ENCODE measurements at regions of chrX and their contacts with region 1.

Region 1: GRCh38 chrX:103175944-103176753 is 38.8 kb upstream of the BEX4 start:
- DNase-seq: peak; percentile 23
- H3K4me3 ChIP-seq: peak overlapping the region in 2 of 3 experiments; percentile 19 to 20
- H3K27ac ChIP-seq: no peak overlapping the region
- H3K4me1 ChIP-seq: no peaks in the 10 kb centered on the region
- H3K27me3 ChIP-seq: no peaks in the 10 kb centered on the region
- CTCF ChIP-seq: peak; percentile 82 to 95

Region 2: DNA sequence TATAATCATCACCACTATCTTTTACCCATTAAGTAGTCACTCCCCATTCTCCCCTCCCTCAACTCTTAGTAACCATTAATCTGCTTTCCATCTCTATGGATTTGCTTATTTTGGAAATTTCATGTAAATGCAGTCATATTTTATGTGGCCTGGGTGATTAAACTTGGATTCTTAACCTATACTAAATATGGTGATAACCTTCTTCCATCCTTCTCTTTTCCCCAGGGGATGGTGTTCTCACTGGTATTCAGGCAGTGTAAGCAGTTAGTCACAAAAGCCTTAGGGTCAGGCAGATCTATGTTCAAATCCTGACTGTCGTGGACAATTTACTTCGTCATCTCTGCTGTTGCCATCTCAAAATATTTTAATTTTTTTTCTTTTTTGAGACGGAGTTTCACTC is 209.4 kb before region 1 on chrX:
- CTCF ChIA-PET with region 1: no interaction called
- dilution Hi-C with region 1: no loop called
- in situ Hi-C with region 1: loop called in 1 of 2 experiments (anchors 10 kb)
- intact Hi-C with region 1: no loop called
- DNase-seq: no peak
- H3K4me3 ChIP-seq: no peak overlapping the region
- H3K27ac ChIP-seq: no peak overlapping the region
- H3K4me1 ChIP-seq: no peaks in the 10 kb centered on the region
- H3K27me3 ChIP-seq: peaks cover 2% of the 10 kb centered on the region
- CTCF ChIP-seq: no peak

Region 3: GRCh38 chrX:103063918-103064434 is 112.2 kb before region 1 on chrX and contains the start of gene BEX1:
- CTCF ChIA-PET with region 1: interaction called, 10 read pairs
- dilution Hi-C with region 1: no loop called
- in situ Hi-C with region 1: no loop called
- intact Hi-C with region 1: no loop called
- DNase-seq: peak; percentile 12
- H3K4me3 ChIP-seq: no peak within 1 kb of the TSS
- H3K27ac ChIP-seq: no peak within 1 kb of the TSS
- H3K4me1 ChIP-seq: no peaks in the 10 kb centered on the region
- H3K27me3 ChIP-seq: no peaks in the 10 kb centered on the region
- CTCF ChIP-seq: no peak
- total RNA-seq, gene BEX1: 3.2 to 9.3 TPM